B cell (primary cell): ENCODE measurements at regions of chr19 and their contacts with region 1.

Region 1: DNA sequence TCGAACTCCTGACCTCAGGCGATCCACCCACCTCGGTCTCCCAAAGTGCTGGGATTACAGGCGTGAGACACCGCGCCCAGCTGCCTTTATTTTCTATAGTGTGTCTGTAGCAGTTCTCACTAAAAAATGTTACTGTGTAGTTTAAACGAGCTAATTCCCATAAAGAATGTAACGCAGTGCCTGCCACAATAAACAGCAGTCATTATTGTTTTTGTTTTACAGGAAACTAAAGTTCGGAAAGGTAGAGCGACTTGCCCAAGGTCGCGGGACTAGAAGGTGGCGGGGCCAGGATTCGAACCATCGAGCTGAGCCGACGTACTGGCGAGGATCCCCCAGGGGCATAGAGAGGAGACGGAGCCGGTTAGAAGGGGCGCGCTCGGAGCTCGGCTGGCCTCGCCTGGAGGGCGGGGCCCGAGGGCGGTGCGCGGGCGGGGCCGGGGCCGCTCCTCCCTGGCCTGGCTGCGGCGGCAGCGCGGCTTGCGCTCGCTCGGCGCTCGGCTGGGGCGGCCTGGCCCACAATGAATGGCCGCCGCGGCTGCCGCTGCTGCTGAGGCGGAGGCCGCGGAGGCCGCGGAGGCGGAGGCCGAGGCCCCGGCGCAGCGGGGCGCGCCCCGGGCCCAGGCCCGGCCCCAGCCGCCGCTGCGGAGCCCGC is at the start of gene NACC1:
- DNase-seq: peak; percentile 92
- ATAC-seq: peak; percentile 78
- H3K4me3 ChIP-seq: peak within 1 kb of the TSS; percentile 81 to 97 (median 85)
- H3K4me3 Mint-ChIP-seq: peak within 1 kb of the TSS; percentile 99
- H3K27ac ChIP-seq: peak within 1 kb of the TSS; percentile 47 to 81
- H3K27ac Mint-ChIP-seq: peak within 1 kb of the TSS; percentile 95
- H3K4me1 ChIP-seq: peaks cover 26 to 46% of the 10 kb centered on the region in 2 donors
- H3K4me1 Mint-ChIP-seq: peaks cover 55% of the 10 kb centered on the region
- H3K27me3 ChIP-seq: no peaks in the 10 kb centered on the region
- H3K27me3 Mint-ChIP-seq: no peaks in the 10 kb centered on the region
- CTCF ChIP-seq: no peak
- total RNA-seq, gene NACC1: 25.9 and 30.6 TPM in 2 replicates

Region 2: DNA sequence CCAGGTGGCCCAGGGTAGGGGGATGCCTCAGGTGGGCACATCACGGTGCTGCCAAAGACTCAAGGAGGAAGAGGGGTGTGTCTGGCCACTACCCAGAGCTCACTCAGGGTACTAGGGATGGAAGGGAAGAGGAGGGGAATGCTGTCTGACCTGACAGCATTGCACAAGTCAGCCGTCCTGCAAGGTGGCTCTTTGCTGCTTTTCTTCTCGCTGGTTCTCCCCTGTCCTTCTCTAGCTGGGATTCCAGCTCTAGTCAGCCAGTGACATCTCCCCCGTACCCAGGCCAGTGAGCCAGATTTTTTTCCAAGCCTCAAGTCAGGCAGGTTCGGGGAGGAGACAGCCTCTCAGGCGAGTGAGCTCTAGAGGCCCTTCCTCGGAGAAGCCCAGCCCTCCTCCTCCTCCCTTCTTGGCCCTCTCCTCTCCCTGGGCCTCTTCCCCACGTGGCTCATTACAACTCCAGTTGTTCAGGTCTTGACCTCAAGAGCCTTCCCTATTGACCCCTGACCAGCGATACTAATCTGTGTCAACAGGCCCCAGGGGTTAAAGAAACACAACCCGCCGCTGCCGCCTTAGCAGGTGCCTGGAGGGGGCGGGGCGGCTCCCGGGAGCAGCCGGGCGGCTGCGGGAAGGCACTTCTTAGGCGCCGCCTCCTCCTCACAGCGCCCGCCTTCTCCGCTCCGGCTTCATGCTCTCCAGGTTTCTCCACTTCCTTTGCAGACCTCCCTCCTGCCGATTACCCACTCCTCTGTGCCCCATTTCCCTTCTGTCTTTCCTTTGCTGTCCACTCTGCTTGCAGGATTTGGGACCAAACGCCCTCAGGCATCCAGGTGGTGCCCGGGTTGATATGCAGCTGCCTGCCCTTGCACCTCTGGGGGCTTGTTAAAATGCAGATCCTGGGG is 66.4 kb before region 1 on chr19:
- CTCF ChIA-PET with region 1: no interaction called
- POLR2A ChIA-PET with region 1: no interaction called
- intact Hi-C with region 1: no loop called
- DNase-seq: no peak
- ATAC-seq: no peak
- H3K4me3 ChIP-seq: no peak overlapping the region
- H3K4me3 Mint-ChIP-seq: peak overlapping the region; percentile 30
- H3K27ac ChIP-seq: no peak overlapping the region
- H3K27ac Mint-ChIP-seq: no peak overlapping the region
- H3K4me1 ChIP-seq: peaks cover 9% of the 10 kb centered on the region in 2 donors
- H3K4me1 Mint-ChIP-seq: peaks cover 5% of the 10 kb centered on the region
- H3K27me3 ChIP-seq: peaks cover 0 to 36% (median 11%) of the 10 kb centered on the region in 4 experiments
- H3K27me3 Mint-ChIP-seq: peaks cover 42% of the 10 kb centered on the region
- CTCF ChIP-seq: no peak

Region 3: GRCh38 chr19:13099073-13099999 is 18.6 kb before region 1 on chr19:
- CTCF ChIA-PET with region 1: interaction called, 31 read pairs
- POLR2A ChIA-PET with region 1: interaction called, 80 read pairs
- intact Hi-C with region 1: loop called (anchors 1 kb)
- DNase-seq: peak; percentile 90
- ATAC-seq: peak; percentile 6
- H3K4me3 ChIP-seq: peak overlapping the region; percentile 47 to 98 (median 96)
- H3K4me3 Mint-ChIP-seq: peak overlapping the region; percentile 93
- H3K27ac ChIP-seq: peak overlapping the region; percentile 79 to 83
- H3K27ac Mint-ChIP-seq: peak overlapping the region; percentile 98
- H3K4me1 ChIP-seq: peaks cover 32 to 71% of the 10 kb centered on the region in 2 donors
- H3K4me1 Mint-ChIP-seq: peaks cover 66% of the 10 kb centered on the region
- H3K27me3 ChIP-seq: no peaks in the 10 kb centered on the region
- H3K27me3 Mint-ChIP-seq: no peaks in the 10 kb centered on the region
- CTCF ChIP-seq: no peak

Region 4: DNA sequence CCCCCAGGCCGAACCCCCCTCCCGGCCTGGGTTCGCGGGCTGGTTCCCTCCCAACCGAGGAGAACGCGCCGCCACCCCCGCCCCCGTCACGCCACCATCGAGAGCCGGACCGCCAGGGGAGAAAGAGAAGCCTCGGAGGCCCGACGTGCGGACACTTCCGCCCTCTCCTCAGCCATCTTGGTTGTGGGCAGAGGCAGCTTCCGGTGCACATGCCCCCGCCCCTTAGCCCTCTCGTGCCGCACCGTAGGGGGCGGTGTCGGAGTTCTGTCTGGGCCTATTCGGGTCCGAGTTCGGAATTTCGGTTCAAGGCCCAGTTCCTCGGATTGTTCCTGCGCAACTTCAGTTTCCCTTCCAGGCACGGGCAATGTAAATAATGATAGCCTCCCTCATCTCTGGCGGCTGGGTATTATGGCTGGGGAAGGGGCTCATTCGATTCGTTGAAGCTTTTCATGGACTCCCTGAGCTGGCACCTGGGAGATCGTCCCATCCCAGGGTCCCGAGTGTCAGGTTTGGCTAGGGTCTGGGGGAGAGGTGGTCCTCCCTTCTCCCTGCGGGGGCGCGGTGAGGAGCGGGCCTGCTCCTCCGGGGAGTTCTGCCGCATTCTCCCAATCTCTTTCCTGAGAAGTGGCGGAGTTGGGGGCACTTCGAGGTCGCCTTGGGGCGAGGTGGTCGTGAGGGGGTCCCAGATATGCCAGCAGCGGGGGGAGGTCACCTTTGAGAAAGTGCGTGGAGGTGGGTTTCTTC is 32.5 kb after region 1 on chr19 and contains the starts of genes IER2 and STX10:
- CTCF ChIA-PET with region 1: interaction called, 12 read pairs
- POLR2A ChIA-PET with region 1: interaction called, 29 read pairs
- intact Hi-C with region 1: loop called (anchors 1 kb)
- DNase-seq: peak; percentile 96
- ATAC-seq: peak; percentile 53
- H3K4me3 ChIP-seq: peak within 1 kb of the TSS; percentile 82 to 100 (median 98)
- H3K4me3 Mint-ChIP-seq: peak within 1 kb of the TSS; percentile 92
- H3K27ac ChIP-seq: peak within 1 kb of the TSS; percentile 87 to 96
- H3K27ac Mint-ChIP-seq: peak within 1 kb of the TSS; percentile 94
- H3K4me1 ChIP-seq: peaks cover 9 to 32% of the 10 kb centered on the region in 2 donors
- H3K4me1 Mint-ChIP-seq: peaks cover 33% of the 10 kb centered on the region
- H3K27me3 ChIP-seq: no peaks in the 10 kb centered on the region
- H3K27me3 Mint-ChIP-seq: no peaks in the 10 kb centered on the region
- CTCF ChIP-seq: peak; percentile 66
- total RNA-seq, gene IER2: 181 and 189 TPM in 2 replicates
- total RNA-seq, gene STX10: 48.4 and 59.0 TPM in 2 replicates

Region 5: GRCh38 chr19:13212759-13213330 is 94.9 kb after region 1 on chr19:
- CTCF ChIA-PET with region 1: interaction called, 3 read pairs
- POLR2A ChIA-PET with region 1: no interaction called
- intact Hi-C with region 1: loop called (anchors 5 kb)
- DNase-seq: peak; percentile 77
- ATAC-seq: no peak
- H3K4me3 ChIP-seq: no peak overlapping the region
- H3K4me3 Mint-ChIP-seq: peak overlapping the region; percentile 44
- H3K27ac ChIP-seq: no peak overlapping the region
- H3K27ac Mint-ChIP-seq: peak overlapping the region; percentile 29
- H3K4me1 ChIP-seq: peaks cover 41 to 54% of the 10 kb centered on the region in 2 donors
- H3K4me1 Mint-ChIP-seq: peaks cover 62% of the 10 kb centered on the region
- H3K27me3 ChIP-seq: no peaks in the 10 kb centered on the region
- H3K27me3 Mint-ChIP-seq: no peaks in the 10 kb centered on the region
- CTCF ChIP-seq: peak; percentile 69

Region 6: DNA sequence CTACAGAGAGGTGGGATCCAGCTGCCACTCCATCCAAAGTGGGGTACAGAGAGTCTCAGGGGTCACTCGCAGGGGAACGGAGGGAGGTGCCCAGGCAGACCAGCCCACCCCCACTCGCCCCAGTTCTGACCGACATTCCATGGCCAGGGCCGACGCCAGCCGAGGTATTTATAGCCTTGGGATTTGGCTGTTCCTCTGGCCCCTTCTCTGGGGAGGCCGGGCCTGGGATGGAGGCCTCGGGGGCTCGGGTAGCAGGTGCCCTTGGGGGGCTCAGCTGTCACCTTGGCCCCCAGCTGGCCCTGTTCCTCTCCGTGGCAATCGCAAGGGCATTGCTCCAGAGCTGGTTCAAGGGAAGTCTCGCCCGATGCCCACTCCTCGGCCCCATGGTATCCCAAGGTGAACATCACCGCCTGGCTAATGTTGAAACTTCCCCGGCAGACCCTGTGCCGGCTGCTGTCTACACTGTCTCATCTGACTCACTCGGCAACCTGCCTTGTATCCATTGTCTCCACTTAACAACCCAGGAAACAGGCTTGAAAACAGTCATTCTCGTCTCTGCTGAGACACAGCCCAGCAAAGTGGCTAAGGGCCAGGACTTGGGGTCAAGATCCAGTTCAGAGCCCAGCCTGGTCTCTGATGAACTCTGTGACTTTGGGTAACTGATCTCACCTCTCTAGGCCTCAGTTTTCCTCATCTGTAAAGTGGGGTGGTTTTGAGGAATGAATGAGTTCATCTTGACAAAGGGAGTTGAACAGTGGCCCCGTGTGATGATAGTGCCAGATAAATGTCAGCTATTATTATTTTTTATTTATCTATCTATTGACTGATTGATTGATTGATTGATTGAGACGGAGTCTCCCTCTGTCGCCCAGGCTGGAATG is 989.9 kb after region 1 on chr19:
- CTCF ChIA-PET with region 1: no interaction called
- POLR2A ChIA-PET with region 1: no interaction called
- intact Hi-C with region 1: no loop called
- DNase-seq: no peak
- ATAC-seq: no peak
- H3K4me3 ChIP-seq: no peak overlapping the region
- H3K4me3 Mint-ChIP-seq: no peak overlapping the region
- H3K27ac ChIP-seq: no peak overlapping the region
- H3K27ac Mint-ChIP-seq: no peak overlapping the region
- H3K4me1 ChIP-seq: no peaks in the 10 kb centered on the region
- H3K4me1 Mint-ChIP-seq: no peaks in the 10 kb centered on the region
- H3K27me3 ChIP-seq: no peaks in the 10 kb centered on the region
- H3K27me3 Mint-ChIP-seq: no peaks in the 10 kb centered on the region
- CTCF ChIP-seq: no peak